ENCODE measurements at regions of chr13 and their contacts with region 1.

Region 1: GRCh38 chr13:95191821-95192563 is 109.3 kb downstream of the ABCC4 start:
- DNase-seq: peak; percentile 74
- ATAC-seq: peak; percentile 91
- H3K4me3 ChIP-seq: no peak overlapping the region
- H3K27ac ChIP-seq: peak overlapping the region; percentile 60
- H3K4me1 ChIP-seq: peaks cover 25% of the 10 kb centered on the region; the same call in 1 of the 2 replicates
- H3K27me3 ChIP-seq: no peaks in the 10 kb centered on the region
- CTCF ChIP-seq: peak; percentile 91
- POLR2A ChIP-seq: no peak
- RAD21 ChIP-seq: peak; percentile 94

Region 2: DNA sequence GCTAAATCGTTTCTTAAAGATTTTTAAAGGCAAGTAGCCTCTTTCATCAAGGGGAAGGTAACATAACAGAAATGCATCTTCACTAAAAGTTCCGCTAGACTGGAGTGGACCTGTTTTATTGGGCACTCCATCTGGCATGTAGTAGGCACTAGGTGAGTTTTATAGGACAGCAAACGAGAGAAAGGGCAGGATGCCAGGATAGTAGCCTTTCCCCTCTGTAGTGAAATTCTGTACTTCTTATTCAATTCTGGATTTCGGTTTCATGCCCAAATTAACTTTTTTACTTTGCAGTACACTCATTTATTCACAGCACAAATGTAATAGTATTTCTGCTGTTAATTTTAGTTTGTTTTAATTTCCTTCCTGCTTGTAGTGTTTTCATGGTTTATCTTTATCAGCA is 545.1 kb before region 1 on chr13:
- CTCF ChIA-PET with region 1: no interaction called
- POLR2A ChIA-PET with region 1: no interaction called
- dilution Hi-C with region 1: no loop called
- in situ Hi-C with region 1: no loop called
- intact Hi-C with region 1: no loop called
- DNase-seq: no peak
- ATAC-seq: no peak
- H3K4me3 ChIP-seq: no peak overlapping the region
- H3K27ac ChIP-seq: no peak overlapping the region
- H3K4me1 ChIP-seq: 0 out of 2 replicates have a peak, but pooled peaks cover 1% of the 10 kb centered on the region
- H3K27me3 ChIP-seq: no peaks in the 10 kb centered on the region
- CTCF ChIP-seq: no peak
- POLR2A ChIP-seq: no peak
- RAD21 ChIP-seq: no peak

Region 3: GRCh38 chr13:94988654-94989053 is 203.3 kb before region 1 on chr13:
- CTCF ChIA-PET with region 1: no interaction called
- POLR2A ChIA-PET with region 1: no interaction called
- dilution Hi-C with region 1: no loop called
- in situ Hi-C with region 1: no loop called
- intact Hi-C with region 1: no loop called
- DNase-seq: no peak
- ATAC-seq: peak; percentile 35; the same call in 1 of the 2 replicates
- H3K4me3 ChIP-seq: no peak overlapping the region
- H3K27ac ChIP-seq: no peak overlapping the region
- H3K4me1 ChIP-seq: no peaks in the 10 kb centered on the region
- H3K27me3 ChIP-seq: peaks cover 7% of the 10 kb centered on the region; the same call in 1 of the 2 replicates
- CTCF ChIP-seq: no peak
- POLR2A ChIP-seq: no peak
- RAD21 ChIP-seq: no peak

Region 4: DNA sequence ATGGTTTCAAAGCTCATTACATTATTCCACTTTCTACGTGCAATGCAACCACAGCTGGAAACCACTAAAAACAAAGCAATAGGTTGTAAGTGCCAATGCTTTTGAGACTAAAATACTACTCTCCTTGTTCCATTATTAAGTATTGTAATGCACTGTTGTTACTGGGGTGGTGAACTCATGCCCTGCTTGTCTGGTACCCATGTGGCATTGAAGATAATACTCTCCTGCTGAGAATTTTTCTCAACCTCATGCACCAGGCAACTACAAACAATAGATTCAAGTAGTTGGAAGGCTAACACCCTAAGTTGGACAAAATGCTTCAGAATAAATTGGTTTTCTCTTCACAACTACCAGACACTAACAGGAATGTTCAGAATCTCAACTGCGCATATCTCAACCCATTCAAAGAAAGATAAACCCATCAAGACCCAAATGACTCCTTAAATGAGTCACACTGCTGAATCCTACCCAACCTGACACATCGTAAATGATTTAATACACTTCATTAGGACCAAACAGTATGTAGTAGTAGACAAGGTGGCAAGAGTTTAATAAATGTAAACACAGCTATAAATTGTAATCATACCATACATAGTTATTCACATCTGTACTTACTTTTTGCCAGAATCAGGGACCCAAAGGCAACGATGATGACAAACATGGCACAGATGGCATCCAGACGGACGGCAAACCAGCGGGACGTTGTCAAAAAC is 118.2 kb before region 1 on chr13:
- CTCF ChIA-PET with region 1: no interaction called
- POLR2A ChIA-PET with region 1: no interaction called
- dilution Hi-C with region 1: no loop called
- in situ Hi-C with region 1: no loop called
- intact Hi-C with region 1: no loop called
- DNase-seq: no peak
- ATAC-seq: peak; percentile 46
- H3K4me3 ChIP-seq: no peak overlapping the region
- H3K27ac ChIP-seq: no peak overlapping the region
- H3K4me1 ChIP-seq: no peaks in the 10 kb centered on the region; the same call in 1 of the 2 replicates
- H3K27me3 ChIP-seq: no peaks in the 10 kb centered on the region
- CTCF ChIP-seq: no peak
- POLR2A ChIP-seq: no peak
- RAD21 ChIP-seq: no peak

Region 5: DNA sequence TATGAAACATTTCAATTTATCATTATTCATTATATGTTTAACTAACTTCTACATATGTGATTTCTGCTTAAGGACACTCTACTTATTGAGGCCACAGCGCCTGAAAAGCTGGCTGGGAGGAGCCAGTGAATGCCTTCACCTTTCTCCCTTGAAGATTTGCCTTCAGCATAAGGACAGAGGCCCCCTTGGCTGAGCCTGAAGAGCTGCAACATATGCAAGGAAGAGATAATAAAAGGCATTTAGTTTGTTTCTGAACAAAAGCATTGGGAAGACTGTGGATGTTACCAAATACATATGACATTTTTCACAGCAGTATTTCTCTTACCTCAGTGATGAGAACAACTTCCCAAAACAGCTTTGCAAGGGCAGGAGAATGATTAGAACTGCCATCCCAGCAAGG is 17.1 kb after region 1 on chr13:
- CTCF ChIA-PET with region 1: interaction called, 12 read pairs
- POLR2A ChIA-PET with region 1: no interaction called
- dilution Hi-C with region 1: no loop called
- in situ Hi-C with region 1: no loop called
- intact Hi-C with region 1: no loop called
- DNase-seq: no peak
- ATAC-seq: no peak
- H3K4me3 ChIP-seq: no peak overlapping the region
- H3K27ac ChIP-seq: no peak overlapping the region
- H3K4me1 ChIP-seq: no peaks in the 10 kb centered on the region
- H3K27me3 ChIP-seq: no peaks in the 10 kb centered on the region
- CTCF ChIP-seq: no peak
- POLR2A ChIP-seq: no peak
- RAD21 ChIP-seq: no peak

Region 6: GRCh38 chr13:95239283-95239682 is 47.3 kb after region 1 on chr13:
- CTCF ChIA-PET with region 1: no interaction called
- POLR2A ChIA-PET with region 1: no interaction called
- dilution Hi-C with region 1: no loop called
- in situ Hi-C with region 1: no loop called
- intact Hi-C with region 1: no loop called
- DNase-seq: peak; percentile 77
- ATAC-seq: peak; percentile 65
- H3K4me3 ChIP-seq: no peak overlapping the region
- H3K27ac ChIP-seq: peak overlapping the region; percentile 41; the same call in 1 of the 2 replicates
- H3K4me1 ChIP-seq: peaks cover 31% of the 10 kb centered on the region
- H3K27me3 ChIP-seq: no peaks in the 10 kb centered on the region
- CTCF ChIP-seq: no peak
- POLR2A ChIP-seq: no peak
- RAD21 ChIP-seq: no peak

Region 7: DNA sequence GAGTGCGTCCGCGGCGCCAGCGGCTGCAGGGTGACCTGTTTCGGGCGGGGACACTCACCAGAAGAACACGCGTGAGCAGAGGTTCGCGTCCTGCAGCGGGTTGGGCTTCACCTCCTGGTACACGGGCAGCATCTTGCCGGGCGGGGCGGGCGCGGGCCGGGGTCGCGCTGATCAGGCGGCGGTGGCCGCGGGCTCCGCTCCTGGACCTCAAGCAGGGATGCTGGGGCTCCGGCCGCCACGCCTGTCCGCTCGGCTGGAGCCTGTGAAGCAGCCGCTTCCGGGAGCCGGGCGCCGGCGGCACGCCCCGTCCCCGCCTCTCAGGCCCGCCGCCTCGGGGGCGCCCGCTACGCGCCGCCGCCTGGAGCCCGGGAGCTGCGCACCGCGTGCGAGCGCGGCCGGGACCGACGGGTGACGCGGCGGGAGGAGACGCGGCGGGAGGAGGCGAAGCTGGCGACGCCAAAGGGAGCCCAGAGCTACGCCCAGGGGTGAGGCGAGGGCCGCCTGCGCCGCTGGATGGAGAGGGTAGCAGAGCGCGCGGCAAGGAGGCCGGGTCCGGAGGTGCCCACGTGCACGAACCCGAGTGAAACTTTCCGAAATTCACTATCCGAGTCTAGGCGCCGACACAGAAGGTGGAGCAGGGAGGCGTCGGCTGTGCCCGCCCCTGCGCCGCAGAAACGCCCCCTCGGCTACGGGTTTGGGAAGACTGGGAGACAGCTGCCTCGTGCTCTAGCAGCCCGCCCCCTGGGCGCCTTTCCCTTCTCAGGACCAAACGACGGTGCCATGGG is 109.4 kb after region 1 on chr13 and contains the start of gene ABCC4:
- CTCF ChIA-PET with region 1: interaction called, 17 read pairs
- POLR2A ChIA-PET with region 1: interaction called, 3 read pairs
- dilution Hi-C with region 1: no loop called
- in situ Hi-C with region 1: no loop called
- intact Hi-C with region 1: loop called (anchors 1 kb)
- DNase-seq: peak; percentile 72
- ATAC-seq: peak; percentile 82
- H3K4me3 ChIP-seq: peak within 1 kb of the TSS; percentile 78
- H3K27ac ChIP-seq: peak within 1 kb of the TSS; percentile 96
- H3K4me1 ChIP-seq: peaks cover 18% of the 10 kb centered on the region
- H3K27me3 ChIP-seq: no peaks in the 10 kb centered on the region
- CTCF ChIP-seq: no peak
- POLR2A ChIP-seq: peak; percentile 57; the same call in 1 of the 2 replicates
- RAD21 ChIP-seq: 0 out of 2 replicates have a peak, but pooled peaks have one; percentile 20
- total RNA-seq, gene ABCC4: 41.4 and 56.1 TPM in 2 replicates

Region 8: DNA sequence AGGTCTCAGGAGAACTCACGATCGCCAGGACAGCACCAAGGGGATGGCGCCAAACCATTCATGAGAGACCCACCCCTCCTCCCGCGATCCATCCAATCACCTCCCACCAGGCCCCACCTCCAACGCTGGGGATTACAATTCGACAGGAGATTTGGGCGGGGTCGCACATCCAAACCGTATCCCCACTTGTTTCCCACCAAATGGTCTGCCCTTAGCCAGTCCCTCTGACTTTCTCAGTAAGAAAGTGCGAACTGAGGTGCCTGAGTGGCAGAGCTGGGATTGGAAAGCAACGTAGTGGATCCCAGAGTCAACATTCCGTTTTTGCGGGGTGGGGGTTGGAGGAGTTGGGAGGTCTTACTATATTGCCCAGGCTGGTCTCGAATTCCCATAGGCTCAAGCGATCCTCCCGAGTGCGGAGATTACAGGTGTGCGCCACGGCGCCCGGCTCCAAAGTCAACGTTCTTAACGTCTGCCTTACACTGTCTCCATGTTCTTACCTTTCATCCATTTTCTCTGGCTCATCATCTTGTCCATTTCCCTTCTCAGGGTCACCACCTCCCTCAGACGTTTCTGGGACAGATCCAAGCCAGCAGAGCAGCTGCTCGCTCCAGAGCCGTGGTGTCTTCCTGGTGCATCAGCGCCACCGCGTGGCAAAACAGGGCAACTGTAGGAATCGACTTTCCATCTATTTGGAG is 212.0 kb after region 1 on chr13:
- CTCF ChIA-PET with region 1: interaction called, 22 read pairs
- POLR2A ChIA-PET with region 1: interaction called, 4 read pairs
- dilution Hi-C with region 1: no loop called
- in situ Hi-C with region 1: loop called (anchors 5 kb)
- intact Hi-C with region 1: loop called (anchors 1 kb)
- DNase-seq: peak; percentile 73
- ATAC-seq: peak; percentile 86
- H3K4me3 ChIP-seq: peak overlapping the region; percentile 41
- H3K27ac ChIP-seq: no peak overlapping the region
- H3K4me1 ChIP-seq: peaks cover 3% of the 10 kb centered on the region; the same call in 1 of the 2 replicates
- H3K27me3 ChIP-seq: no peaks in the 10 kb centered on the region; the same call in 1 of the 2 replicates
- CTCF ChIP-seq: peak; percentile 97
- POLR2A ChIP-seq: peak; percentile 50
- RAD21 ChIP-seq: peak; percentile 98

Measured in IMR-90 (cell line).